Activated CD4-positive, alpha-beta memory T cell treated with anti-CD3 and anti-CD28 coated beads, Interleukin-2, amount 10 ng/mL, durations not matched to agents 7 days and 5 days (primary cell): ENCODE measurements at regions of chr19 and their contacts with region 1.

Region 1: DNA sequence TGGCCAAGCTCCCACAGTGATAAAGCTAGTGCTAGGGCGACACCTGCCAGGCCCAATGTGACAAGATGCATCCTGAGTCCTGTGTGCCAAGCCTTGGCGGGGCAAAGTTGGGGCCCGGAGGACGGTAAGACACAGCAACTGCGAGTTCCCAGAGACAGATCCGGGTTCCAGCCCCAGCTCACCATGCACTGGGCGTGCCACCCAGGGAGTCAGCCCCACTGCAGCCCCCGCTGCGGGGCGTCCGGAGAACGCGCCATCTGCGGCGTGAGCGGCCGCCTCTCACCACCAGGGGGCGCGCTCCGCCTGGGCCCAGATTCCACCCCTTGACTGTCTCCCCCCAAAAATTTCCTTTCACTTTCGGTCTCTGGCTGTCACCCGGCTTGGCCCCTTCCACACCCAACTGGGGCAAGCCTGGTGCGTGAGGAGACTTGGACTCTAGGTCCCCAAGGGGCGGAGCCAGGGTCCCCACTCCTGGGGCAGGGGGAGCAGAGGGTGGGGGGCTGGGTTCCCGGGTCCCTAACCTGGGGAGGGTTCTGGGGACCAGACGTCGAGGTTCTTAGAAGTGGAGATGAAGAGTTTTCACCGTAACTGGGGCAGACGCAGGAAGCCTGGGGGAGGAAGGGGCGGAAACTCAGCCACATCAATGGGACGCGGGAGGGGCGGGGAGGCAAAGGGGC is at the start of gene FLT3LG:
- DNase-seq: peak; percentile 94
- H3K4me3 Mint-ChIP-seq: peak within 1 kb of the TSS; percentile 97
- H3K27ac Mint-ChIP-seq: peak within 1 kb of the TSS; percentile 92
- H3K4me1 Mint-ChIP-seq: peaks cover 60% of the 10 kb centered on the region
- H3K27me3 Mint-ChIP-seq: no peaks in the 10 kb centered on the region
- total RNA-seq, gene FLT3LG: 187 to 197 TPM

Region 2: DNA sequence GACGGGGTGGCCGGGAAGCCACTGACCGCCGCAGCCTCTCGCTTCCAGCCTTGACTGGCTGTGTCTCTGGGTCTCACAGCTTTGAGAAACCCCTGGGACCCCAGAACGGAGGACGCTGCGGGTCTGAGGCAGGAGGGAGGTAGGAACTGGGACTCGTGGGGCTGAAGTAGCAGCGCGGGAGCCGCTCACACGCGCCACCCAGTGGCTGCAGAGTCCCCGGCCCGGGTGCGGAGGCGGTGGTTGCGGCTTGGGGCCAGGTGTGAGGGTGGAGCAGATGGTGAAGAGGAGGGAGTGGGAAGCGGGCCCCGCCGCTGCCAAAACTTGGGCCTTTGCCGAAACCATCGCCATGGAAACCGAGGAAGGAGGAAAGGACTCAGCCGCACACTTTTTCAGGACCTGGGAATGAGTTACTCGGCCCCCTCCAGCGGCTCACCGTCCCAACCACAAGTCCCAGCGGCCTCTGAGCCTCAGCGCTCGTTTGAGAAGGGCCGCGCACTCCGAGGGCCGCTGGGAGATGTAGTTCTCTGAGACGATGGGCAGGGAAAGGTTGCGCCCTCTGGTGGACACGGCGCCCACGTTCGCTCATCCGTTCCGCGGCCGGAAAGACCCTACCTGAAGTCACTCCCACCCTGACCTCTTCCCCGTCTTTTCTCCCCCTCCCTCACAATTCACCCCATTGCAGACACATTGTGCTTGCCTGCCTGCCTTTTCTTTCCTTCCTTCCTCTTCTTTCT is 30.5 kb before region 1 on chr19:
- CTCF ChIA-PET with region 1: interaction called, 17 read pairs
- POLR2A ChIA-PET with region 1: interaction called, 19 read pairs
- DNase-seq: peak; percentile 95
- H3K4me3 Mint-ChIP-seq: peak overlapping the region; percentile 80
- H3K27ac Mint-ChIP-seq: peak overlapping the region; percentile 83
- H3K4me1 Mint-ChIP-seq: peaks cover 62% of the 10 kb centered on the region
- H3K27me3 Mint-ChIP-seq: peaks cover 38% of the 10 kb centered on the region

Region 3: GRCh38 chr19:49458567-49458903 is 15.5 kb before region 1 on chr19:
- CTCF ChIA-PET with region 1: interaction called, 159 read pairs
- POLR2A ChIA-PET with region 1: interaction called, 192 read pairs
- DNase-seq: no peak
- H3K4me3 Mint-ChIP-seq: no peak overlapping the region
- H3K27ac Mint-ChIP-seq: peak overlapping the region; percentile 88
- H3K4me1 Mint-ChIP-seq: peaks cover 44% of the 10 kb centered on the region
- H3K27me3 Mint-ChIP-seq: no peaks in the 10 kb centered on the region

Region 4: DNA sequence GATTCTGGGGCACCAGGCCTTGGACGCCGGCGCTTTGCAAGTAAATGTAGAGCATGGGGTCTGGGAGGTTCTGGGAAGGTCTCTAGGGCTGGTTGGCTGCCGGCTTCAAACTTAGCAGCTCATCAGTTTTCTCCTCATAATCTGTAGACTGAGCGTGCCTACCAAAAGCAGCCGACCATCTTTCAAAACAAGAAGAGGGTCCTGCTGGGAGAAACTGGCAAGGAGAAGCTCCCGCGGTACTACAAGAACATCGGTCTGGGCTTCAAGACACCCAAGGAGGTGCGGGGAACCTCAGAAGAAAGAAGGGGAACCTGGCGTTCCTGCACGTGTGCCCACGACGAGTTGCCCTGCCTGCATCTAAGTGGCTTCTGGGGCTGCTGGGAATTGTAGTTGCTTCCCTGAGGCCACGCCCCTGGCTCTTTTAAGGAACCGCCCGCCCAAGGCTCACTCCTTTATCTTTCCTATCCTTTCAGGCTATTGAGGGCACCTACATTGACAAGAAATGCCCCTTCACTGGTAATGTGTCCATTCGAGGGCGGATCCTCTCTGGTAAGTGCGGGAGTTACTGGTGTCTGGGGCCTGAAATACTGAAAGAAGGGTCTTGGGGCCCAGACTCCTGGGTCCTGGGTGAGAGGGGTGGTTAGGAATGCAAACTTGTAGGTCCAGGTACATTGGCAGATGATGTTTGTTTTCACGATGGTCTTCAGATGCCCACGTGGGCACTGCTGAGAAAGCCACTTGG is 23.2 kb after region 1 on chr19:
- CTCF ChIA-PET with region 1: interaction called, 6 read pairs
- POLR2A ChIA-PET with region 1: interaction called, 21 read pairs
- DNase-seq: peak; percentile 84
- H3K4me3 Mint-ChIP-seq: peak overlapping the region; percentile 98
- H3K27ac Mint-ChIP-seq: peak overlapping the region; percentile 99
- H3K4me1 Mint-ChIP-seq: peaks cover 67% of the 10 kb centered on the region
- H3K27me3 Mint-ChIP-seq: no peaks in the 10 kb centered on the region